ENCODE measurements at regions of chr21 and their contacts with region 1.

Region 1: GRCh38 chr21:38355992-38356797 is 99.4 kb downstream of the KCNJ15 start:
- DNase-seq: peak; percentile 46 to 89 (median 76)

Region 2: DNA sequence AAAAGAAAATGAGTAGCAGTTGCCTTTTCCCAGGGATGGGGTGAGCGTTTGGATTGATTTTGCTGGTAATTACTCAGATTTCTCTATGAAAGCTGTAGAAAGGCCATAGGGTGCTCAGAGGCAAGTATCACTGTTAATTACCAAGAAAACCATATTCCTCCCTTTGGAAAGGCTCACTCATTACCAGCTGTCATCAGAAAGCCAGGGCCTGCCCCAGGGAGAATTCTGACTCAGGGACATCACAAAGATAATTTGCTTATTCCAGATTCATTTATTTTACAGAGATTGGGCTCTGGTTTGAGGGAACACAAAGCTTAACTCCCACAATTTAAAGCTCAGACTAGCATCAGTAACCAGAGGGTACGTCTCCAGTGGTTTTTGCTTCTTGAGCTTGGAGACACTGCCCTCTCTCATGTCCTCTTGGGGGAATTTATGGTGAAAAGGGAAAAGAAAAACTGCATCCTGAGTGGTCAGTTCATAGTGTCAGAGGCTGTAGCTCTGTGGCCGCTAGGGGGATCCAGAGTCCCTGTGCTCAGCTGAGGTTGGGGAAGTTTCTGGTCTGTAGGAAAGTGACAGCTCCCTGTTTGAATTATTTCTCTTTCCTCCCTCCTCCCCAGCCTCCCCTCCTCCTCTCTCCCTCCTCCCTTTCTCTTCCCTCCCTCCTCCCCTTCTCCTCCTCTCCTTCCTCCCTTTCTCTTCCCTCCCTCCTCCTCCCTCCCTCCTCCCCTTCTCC is 644.2 kb before region 1 on chr21:
- intact Hi-C with region 1: loop called (anchors 10 kb)
- DNase-seq: peak; percentile 20 to 79 (median 51)

Region 3: GRCh38 chr21:38219049-38219628 is 137.1 kb before region 1 on chr21:
- intact Hi-C with region 1: loop called (anchors 5 kb)
- DNase-seq: peak in 40 of 42 donors; percentile 6 to 82 (median 45)

Measured in head of caudate nucleus (tissue), 42 donors.